ENCODE measurements at regions of chrX and their contacts with region 1.

Region 1: GRCh38 chrX:97685753-97686152 is 802.0 kb downstream of the RPA4 start:
- DNase-seq: peak; percentile 12
- H3K4me3 ChIP-seq: no peak overlapping the region
- H3K27ac ChIP-seq: no peak overlapping the region
- H3K4me1 ChIP-seq: no peaks in the 10 kb centered on the region
- H3K27me3 ChIP-seq: no peaks in the 10 kb centered on the region
- CTCF ChIP-seq: peak; percentile 77 to 92

Region 2: GRCh38 chrX:96372313-96373046 is 1313.3 kb before region 1 on chrX:
- CTCF ChIA-PET with region 1: no interaction called
- dilution Hi-C with region 1: no loop called
- in situ Hi-C with region 1: no loop called
- intact Hi-C with region 1: loop called (anchors 5 kb)
- DNase-seq: peak; percentile 23
- H3K4me3 ChIP-seq: no peak overlapping the region
- H3K27ac ChIP-seq: no peak overlapping the region
- H3K4me1 ChIP-seq: no peaks in the 10 kb centered on the region
- H3K27me3 ChIP-seq: no peaks in the 10 kb centered on the region
- CTCF ChIP-seq: peak; percentile 64 to 76

Region 3: DNA sequence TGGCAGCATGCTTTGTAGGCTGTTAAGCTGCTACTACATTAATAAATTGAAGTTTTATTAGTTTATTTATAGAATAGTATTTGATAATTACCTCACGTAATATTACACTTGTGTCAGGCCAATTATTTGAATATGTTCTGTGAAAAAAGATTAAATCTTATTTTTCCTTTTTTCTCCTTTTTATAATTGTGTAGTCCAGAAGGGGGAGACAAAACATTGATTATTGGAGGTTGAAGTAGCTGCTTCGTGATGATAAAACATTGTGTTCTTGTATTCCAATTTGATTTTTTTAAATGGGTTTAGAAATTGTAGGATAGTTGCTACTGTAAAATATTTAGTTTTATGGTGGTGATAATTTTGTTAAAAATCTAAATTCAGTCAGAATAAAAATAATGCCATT is 915.4 kb before region 1 on chrX:
- CTCF ChIA-PET with region 1: no interaction called
- dilution Hi-C with region 1: no loop called
- in situ Hi-C with region 1: no loop called
- intact Hi-C with region 1: loop called (anchors 5 kb)
- DNase-seq: no peak
- H3K4me3 ChIP-seq: no peak overlapping the region
- H3K27ac ChIP-seq: no peak overlapping the region
- H3K4me1 ChIP-seq: no peaks in the 10 kb centered on the region
- H3K27me3 ChIP-seq: no peaks in the 10 kb centered on the region
- CTCF ChIP-seq: peak; percentile 23 to 46

Region 4: DNA sequence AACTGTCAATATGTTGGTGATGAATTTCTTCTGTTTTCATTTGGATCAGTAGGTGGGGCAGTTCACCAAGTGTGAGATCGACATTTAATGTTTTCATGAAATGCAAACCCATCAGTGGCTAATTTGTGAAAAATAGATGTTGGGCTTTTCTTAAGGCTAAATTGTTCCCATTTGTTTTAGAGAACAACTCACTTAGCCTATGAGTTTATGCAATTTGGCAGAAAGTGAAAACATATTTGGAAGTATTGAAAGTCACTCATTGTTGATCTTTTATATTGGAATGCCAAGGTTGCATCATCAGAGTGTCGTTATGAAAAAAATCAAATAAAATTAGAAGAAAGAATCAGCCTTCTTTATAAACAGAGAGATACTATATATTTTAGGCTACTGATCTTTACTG is 669.6 kb before region 1 on chrX:
- CTCF ChIA-PET with region 1: no interaction called
- dilution Hi-C with region 1: no loop called
- in situ Hi-C with region 1: no loop called
- intact Hi-C with region 1: loop called (anchors 10 kb)
- DNase-seq: no peak
- H3K4me3 ChIP-seq: no peak overlapping the region
- H3K27ac ChIP-seq: no peak overlapping the region
- H3K4me1 ChIP-seq: no peaks in the 10 kb centered on the region
- H3K27me3 ChIP-seq: no peaks in the 10 kb centered on the region
- CTCF ChIP-seq: no peak

Region 5: DNA sequence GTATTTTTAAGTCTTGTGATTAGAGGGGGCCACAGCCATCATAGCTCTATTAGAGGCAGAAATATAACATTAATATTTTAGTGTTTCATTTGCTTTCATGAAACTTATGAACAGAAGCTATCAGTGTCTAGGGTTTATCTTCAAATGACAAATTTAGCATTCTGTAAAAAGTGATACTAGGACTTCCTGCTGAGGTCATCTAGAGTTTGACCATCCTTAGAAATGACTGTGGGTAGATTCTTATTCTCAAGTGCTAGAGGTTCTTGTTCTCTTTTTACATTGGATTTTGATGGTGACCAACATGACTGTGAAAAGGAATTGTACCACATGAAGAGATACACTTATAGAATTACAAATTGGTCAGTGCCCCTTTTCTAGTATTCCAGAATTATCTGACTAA is 233.5 kb before region 1 on chrX:
- CTCF ChIA-PET with region 1: no interaction called
- dilution Hi-C with region 1: no loop called
- in situ Hi-C with region 1: no loop called
- intact Hi-C with region 1: loop called (anchors 10 kb)
- DNase-seq: no peak
- H3K4me3 ChIP-seq: no peak overlapping the region
- H3K27ac ChIP-seq: no peak overlapping the region
- H3K4me1 ChIP-seq: no peaks in the 10 kb centered on the region
- H3K27me3 ChIP-seq: no peaks in the 10 kb centered on the region
- CTCF ChIP-seq: no peak

Measured in mammary epithelial cell (primary cell).